ENCODE measurements at regions of chr13 and their contacts with region 1.

Region 1: DNA sequence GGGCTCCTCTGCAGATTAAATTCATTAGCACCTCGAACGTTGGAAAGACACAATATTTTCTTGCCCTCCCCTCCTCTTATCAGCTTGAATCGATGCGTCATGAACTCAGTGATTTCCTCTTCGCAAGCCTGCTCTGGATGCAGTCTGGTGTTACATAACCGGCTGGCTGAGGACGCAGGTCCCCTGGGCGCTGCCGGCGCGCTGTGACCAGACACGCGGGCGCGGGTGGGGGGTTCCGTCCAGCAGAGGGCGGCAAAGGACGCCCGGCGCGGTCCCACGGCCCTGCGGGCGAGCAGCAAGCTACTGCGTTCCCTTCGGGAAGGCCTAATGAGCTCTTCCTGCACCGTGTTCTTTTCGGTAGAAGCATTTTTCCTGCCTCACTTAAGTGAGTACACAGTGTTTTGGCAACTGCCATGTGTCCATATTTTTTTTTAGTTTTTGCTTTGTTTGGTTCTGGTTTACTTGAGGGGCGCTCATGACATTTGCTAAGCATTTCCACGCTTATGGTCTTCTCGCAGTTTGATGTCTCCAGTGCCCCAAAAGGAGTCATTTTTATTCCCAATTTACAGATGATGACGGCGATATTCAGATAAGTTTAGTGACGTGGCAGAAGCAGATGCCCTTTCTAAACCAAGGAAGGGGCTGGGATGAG is 112.2 kb upstream of the MBNL2 start:
- DNase-seq: peak; percentile 85
- ATAC-seq: peak; percentile 90
- H3K4me3 ChIP-seq: no peak overlapping the region
- H3K27ac ChIP-seq: no peak overlapping the region
- H3K4me1 ChIP-seq: peaks cover 27% of the 10 kb centered on the region
- H3K27me3 ChIP-seq: no peaks in the 10 kb centered on the region
- CTCF ChIP-seq: peak; percentile 98
- POLR2A ChIP-seq: peak; percentile 44; the same call in 1 of the 2 replicates
- RAD21 ChIP-seq: peak; percentile 97

Region 2: DNA sequence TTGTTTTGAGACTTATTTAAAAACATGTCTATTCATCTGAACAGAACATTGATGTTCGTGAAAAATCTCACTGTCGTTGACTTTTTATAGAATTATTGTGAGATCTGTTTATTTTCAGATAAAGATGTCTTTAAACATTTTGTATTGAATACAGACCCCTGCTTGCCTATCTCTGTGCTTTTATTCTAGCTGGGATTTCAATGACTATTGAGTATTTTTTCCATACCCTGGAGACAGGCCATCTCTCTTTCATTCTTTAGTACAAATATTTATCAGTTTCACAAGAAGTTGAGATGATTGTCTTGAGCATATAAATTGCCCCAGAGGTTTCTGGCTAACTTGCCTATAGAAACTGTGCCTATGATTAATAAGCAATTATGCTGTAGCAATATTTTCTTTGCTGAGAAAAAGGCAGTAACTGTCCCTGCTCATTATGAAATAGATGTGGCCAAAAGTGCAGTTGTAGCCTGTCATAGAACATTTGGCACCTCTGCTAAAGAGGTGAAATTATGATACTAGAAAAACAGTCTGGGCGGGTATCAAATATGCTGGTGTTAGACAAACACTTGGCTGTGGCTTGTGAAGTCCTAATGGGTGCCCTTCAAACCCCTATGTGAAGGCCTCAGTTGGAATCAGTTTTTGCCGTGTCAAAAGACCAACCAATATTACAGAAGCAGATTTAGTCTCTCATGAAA is 659.5 kb before region 1 on chr13:
- CTCF ChIA-PET with region 1: no interaction called
- POLR2A ChIA-PET with region 1: no interaction called
- dilution Hi-C with region 1: no loop called
- in situ Hi-C with region 1: no loop called
- intact Hi-C with region 1: no loop called
- DNase-seq: no peak
- ATAC-seq: no peak
- H3K4me3 ChIP-seq: no peak overlapping the region
- H3K27ac ChIP-seq: no peak overlapping the region
- H3K4me1 ChIP-seq: no peaks in the 10 kb centered on the region
- H3K27me3 ChIP-seq: no peaks in the 10 kb centered on the region
- CTCF ChIP-seq: no peak
- POLR2A ChIP-seq: no peak
- RAD21 ChIP-seq: no peak

Region 3: DNA sequence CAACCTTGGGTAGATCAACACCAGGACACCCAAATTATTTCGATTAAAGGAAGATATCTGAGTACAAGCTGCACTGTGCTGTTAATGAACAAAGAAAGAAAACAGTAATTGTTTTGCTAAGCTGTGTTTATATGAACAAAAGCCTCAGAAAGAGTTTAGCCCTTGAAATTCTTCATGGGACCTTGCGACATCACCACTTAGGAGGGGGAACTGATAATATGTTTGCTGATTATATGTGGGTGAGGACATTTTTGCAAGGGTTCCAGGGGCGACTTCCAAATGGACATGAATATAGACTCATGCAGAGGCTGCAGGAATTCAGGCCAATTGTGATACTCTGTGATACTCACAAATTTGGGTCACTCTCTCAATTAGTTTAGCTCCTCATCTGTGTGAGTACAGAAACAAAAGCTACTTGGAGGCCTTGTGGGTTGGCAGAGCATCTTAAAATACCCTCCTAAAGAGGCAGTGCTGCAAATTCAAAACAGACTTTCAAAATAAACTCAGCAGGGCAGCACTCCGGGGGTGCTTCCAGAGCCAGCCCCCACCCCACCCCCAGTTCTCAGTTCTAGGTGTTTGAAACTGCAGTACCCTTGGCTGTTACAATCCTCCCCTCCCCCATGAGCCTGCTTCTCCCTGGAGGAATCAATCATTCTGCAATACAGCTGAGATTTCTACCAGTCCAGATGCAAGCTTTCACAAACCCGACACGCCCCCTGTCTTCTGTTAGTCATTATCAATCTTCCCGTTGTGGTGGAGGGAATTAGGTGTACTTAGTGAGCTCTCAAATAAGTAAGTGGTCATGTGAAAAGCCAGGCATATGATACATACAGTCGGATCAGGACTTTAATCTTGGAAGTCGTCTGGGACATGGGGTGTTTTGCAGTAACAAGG is 15.2 kb after region 1 on chr13:
- CTCF ChIA-PET with region 1: interaction called, 3 read pairs
- POLR2A ChIA-PET with region 1: interaction called, 24 read pairs
- dilution Hi-C with region 1: no loop called
- in situ Hi-C with region 1: no loop called
- intact Hi-C with region 1: no loop called
- DNase-seq: peak; percentile 74
- ATAC-seq: peak; percentile 24
- H3K4me3 ChIP-seq: no peak overlapping the region
- H3K27ac ChIP-seq: peak overlapping the region; percentile 69; the same call in 1 of the 2 replicates
- H3K4me1 ChIP-seq: peaks cover 28% of the 10 kb centered on the region
- H3K27me3 ChIP-seq: no peaks in the 10 kb centered on the region
- CTCF ChIP-seq: no peak
- POLR2A ChIP-seq: no peak
- RAD21 ChIP-seq: no peak

Region 4: DNA sequence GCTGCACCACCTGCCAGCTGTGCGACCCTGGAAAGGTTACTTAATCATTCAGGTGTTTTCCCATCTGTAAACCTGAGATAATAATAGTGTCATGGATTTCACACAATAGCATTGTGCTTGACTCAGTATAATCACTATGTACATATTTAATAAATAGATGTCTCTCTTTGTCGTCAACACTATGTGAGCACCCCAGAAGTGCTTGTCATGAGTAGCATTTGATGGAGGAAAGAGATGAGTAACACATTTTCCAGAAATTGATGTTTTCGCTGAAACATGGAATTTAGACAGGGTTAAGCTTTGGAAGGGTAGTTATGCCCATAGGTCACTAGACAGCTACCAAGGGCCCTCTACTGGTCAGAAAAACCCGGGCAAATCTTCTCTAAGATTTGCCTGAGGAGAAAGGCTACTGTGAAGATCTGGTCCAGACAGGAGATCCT is 102.7 kb after region 1 on chr13:
- CTCF ChIA-PET with region 1: interaction called, 23 read pairs
- POLR2A ChIA-PET with region 1: no interaction called
- dilution Hi-C with region 1: no loop called
- in situ Hi-C with region 1: no loop called
- intact Hi-C with region 1: loop called (anchors 1 kb)
- DNase-seq: peak; percentile 49
- ATAC-seq: peak; percentile 91
- H3K4me3 ChIP-seq: no peak overlapping the region
- H3K27ac ChIP-seq: no peak overlapping the region
- H3K4me1 ChIP-seq: peaks cover 7% of the 10 kb centered on the region
- H3K27me3 ChIP-seq: no peaks in the 10 kb centered on the region
- CTCF ChIP-seq: peak; percentile 71
- POLR2A ChIP-seq: no peak
- RAD21 ChIP-seq: peak; percentile 73

Region 5: GRCh38 chr13:97344265-97345175 is 234.6 kb after region 1 on chr13:
- CTCF ChIA-PET with region 1: interaction called, 4 read pairs
- POLR2A ChIA-PET with region 1: no interaction called
- dilution Hi-C with region 1: no loop called
- in situ Hi-C with region 1: no loop called
- intact Hi-C with region 1: loop called (anchors 1 kb)
- DNase-seq: peak; percentile 61
- ATAC-seq: peak; percentile 75
- H3K4me3 ChIP-seq: no peak overlapping the region
- H3K27ac ChIP-seq: 0 out of 2 replicates have a peak overlapping the region, but pooled peaks have one; percentile 33
- H3K4me1 ChIP-seq: peaks cover 10% of the 10 kb centered on the region
- H3K27me3 ChIP-seq: no peaks in the 10 kb centered on the region
- CTCF ChIP-seq: peak; percentile 68
- POLR2A ChIP-seq: no peak
- RAD21 ChIP-seq: peak; percentile 75

Region 6: DNA sequence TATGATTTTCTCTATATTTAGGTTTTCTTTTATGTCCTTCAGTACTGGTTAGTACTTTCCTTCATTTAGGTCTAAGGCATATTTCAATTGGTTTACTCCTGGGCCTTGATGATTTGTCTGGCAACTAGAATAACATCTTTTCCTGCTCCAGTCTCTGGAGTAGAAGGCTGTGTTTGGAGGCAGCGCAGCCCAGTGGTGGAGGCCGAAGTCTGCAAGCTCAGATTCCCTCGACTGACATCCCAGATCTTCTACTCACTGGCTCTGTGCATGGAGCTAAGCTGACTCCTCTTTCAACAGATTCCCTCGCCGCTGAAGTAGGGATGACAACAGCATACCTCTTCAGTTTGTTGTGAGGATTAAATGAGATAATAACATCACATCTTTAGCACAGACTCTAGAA is 465.0 kb after region 1 on chr13:
- CTCF ChIA-PET with region 1: no interaction called
- POLR2A ChIA-PET with region 1: no interaction called
- dilution Hi-C with region 1: no loop called
- in situ Hi-C with region 1: no loop called
- intact Hi-C with region 1: loop called (anchors 10 kb)
- DNase-seq: peak; percentile 52
- ATAC-seq: peak; percentile 80
- H3K4me3 ChIP-seq: no peak overlapping the region
- H3K27ac ChIP-seq: no peak overlapping the region
- H3K4me1 ChIP-seq: peaks cover 2% of the 10 kb centered on the region; the same call in 1 of the 2 replicates
- H3K27me3 ChIP-seq: peaks cover 2% of the 10 kb centered on the region; the same call in 1 of the 2 replicates
- CTCF ChIP-seq: peak; percentile 55
- POLR2A ChIP-seq: no peak
- RAD21 ChIP-seq: peak; percentile 64

Measured in IMR-90 (cell line).